Colonic mucosa (tissue), 4 donors: ENCODE measurements at regions of chr11 and their contacts with region 1.

Region 1: GRCh38 chr11:65540297-65541092 is 15.6 kb downstream of the SCYL1 start:
- DNase-seq: peak; percentile 94
- H3K4me3 ChIP-seq: peak overlapping the region; percentile 45
- H3K27ac ChIP-seq: peak overlapping the region; percentile 81
- H3K4me1 ChIP-seq: peaks cover 8% of the 10 kb centered on the region
- H3K27me3 ChIP-seq: no peaks in the 10 kb centered on the region
- CTCF ChIP-seq: peak; percentile 81

Region 2: DNA sequence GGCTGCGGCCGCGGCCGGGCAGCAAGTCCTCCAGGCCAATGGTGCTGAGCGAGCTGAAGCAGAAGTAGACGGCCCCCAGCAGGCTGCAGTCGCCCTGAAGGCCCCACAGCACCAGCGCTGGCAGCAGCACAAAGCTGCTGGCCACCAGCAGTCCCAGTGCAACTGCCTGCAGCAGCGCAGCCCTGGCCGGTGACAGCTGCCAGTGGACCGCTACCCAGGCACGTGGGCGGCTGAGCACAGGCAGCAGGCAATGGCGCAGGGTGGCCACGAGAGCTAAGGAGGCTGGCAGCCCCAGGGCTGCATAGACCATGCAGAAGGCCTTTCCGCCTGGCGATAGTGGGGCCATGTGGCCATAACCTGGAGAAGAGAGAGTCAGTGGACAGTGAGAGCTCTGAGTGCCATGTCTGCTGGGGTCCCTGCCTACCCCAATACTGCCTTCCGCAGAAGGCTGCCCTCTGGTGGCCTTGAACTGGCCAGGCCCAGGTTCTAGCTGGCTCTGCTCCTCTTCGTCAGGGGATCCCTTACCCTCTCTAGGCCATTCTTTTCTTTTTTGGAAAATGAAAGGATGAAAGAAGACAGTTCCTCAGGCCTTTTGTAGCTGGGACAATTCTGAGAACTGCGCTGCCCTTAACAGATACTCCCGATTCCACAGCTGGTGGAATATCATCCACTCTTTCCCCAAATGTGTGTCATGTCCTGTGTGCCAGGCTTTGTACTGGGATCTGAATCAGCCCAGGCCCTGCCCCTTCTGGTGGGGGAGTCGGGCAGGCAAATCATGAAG is 53.2 kb after region 1 on chr11:
- intact Hi-C with region 1: loop called (anchors 5 kb)
- DNase-seq: no peak
- H3K4me3 ChIP-seq: no peak overlapping the region
- H3K27ac ChIP-seq: no peak overlapping the region
- H3K4me1 ChIP-seq: peaks cover 5% of the 10 kb centered on the region
- H3K27me3 ChIP-seq: no peaks in the 10 kb centered on the region
- CTCF ChIP-seq: peak; percentile 38

Region 3: DNA sequence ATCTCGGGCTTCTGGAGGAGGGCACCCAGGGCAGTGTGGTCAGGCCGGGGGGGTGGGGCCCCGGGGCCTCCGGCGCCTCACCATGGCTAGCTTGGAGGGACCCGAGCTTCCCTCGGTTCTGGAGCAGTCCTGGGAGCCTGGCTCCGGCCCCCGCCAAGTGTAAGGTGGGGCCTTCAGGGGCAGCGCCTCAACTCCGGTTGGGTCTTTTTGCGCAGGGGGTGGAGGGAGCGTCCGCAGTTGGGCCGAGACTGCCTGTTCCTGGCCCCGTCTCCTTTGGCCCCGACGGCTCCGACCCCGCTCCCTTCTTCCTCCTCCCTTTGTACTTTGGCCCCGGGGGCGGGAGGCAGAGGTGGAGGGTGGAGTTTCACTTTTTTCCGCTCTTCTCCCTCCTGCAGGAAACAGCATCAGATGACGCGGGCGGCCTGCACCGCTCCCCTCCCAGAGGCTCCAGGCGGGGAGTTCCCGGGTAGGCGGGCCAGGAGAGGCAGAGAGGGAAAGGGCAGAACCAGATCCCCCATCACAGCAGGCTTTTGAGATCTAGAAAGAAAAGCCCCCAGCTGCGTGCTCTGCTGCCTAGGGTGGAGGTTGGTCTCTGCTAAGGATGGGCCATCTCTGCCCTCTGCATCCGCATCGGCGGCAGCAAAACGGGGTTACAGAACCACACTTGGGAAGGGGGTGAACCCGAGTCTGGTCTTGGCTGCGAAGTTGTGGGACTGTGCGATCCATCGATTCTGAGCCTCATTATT is 73.6 kb after region 1 on chr11 and contains the start of gene MAP3K11:
- intact Hi-C with region 1: loop called (anchors 5 kb)
- DNase-seq: peak; percentile 98
- H3K4me3 ChIP-seq: peak within 1 kb of the TSS; percentile 90
- H3K27ac ChIP-seq: peak within 1 kb of the TSS; percentile 98
- H3K4me1 ChIP-seq: peaks cover 36% of the 10 kb centered on the region
- H3K27me3 ChIP-seq: no peaks in the 10 kb centered on the region
- CTCF ChIP-seq: no peak
- total RNA-seq, gene MAP3K11: 92.7 to 102 TPM